Transverse colon (tissue), 4 donors: ENCODE measurements at regions of chr2 and their contacts with region 1.

Region 1: GRCh38 chr2:238239872-238240751 is at the start of gene HES6:
- DNase-seq: peak; percentile 91
- H3K4me3 ChIP-seq: peak within 1 kb of the TSS; percentile 64 to 89 (median 78)
- H3K27ac ChIP-seq: peak within 1 kb of the TSS; percentile 84 to 89 (median 88)
- H3K4me1 ChIP-seq: peaks cover 23 to 48% (median 40%) of the 10 kb centered on the region in 4 donors
- H3K27me3 ChIP-seq: peaks cover 8% of the 10 kb centered on the region
- CTCF ChIP-seq: no peak
- EP300 ChIP-seq: no peak
- POLR2A ChIP-seq: no peak
- total RNA-seq, gene HES6: 15.0 to 94.5 (median 31.7) TPM

Region 2: DNA sequence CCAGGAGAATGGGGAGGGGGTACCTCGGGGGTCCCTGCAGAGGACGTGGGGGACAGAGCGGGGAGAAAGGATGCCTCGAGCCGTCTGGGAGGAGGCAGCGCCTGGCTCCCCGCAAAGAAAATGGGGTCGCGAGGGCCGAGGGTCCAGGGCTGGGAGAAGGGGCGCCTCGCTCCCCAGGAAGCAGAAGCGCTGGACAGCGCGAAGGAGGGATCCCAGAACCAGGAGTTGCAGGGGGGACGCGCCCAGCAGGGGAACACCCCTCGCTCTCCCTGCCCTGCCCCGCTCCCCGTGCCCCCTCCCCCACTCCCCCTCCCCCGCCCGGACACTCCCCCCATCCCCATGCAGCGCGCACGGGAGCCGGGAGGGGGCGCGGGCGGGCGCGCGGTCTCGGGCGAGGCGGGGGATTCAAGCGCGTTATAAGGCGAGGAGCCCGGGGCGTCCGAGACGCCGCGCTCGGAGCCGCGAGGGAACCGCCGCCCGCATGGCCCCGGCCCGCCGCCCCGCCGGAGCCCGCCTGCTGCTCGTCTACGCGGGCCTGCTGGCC is 81.5 kb before region 1 on chr2 and contains the start of gene ERFE:
- in situ Hi-C with region 1: no loop called
- intact Hi-C with region 1: no loop called
- DNase-seq: peak; percentile 47
- H3K4me3 ChIP-seq: peak within 1 kb of the TSS in 3 of 4 donors; percentile 22 to 41 (median 31)
- H3K27ac ChIP-seq: no peak within 1 kb of the TSS
- H3K4me1 ChIP-seq: peaks cover 12 to 21% (median 14%) of the 10 kb centered on the region in 4 donors
- H3K27me3 ChIP-seq: peaks cover 52% of the 10 kb centered on the region
- CTCF ChIP-seq: peak in 3 of 5 experiments; percentile 49 to 62 (median 49)
- EP300 ChIP-seq: no peak
- POLR2A ChIP-seq: no peak
- total RNA-seq, gene ERFE: 0.41 TPM in 1 of 4 donors, not detected in the others

Region 3: DNA sequence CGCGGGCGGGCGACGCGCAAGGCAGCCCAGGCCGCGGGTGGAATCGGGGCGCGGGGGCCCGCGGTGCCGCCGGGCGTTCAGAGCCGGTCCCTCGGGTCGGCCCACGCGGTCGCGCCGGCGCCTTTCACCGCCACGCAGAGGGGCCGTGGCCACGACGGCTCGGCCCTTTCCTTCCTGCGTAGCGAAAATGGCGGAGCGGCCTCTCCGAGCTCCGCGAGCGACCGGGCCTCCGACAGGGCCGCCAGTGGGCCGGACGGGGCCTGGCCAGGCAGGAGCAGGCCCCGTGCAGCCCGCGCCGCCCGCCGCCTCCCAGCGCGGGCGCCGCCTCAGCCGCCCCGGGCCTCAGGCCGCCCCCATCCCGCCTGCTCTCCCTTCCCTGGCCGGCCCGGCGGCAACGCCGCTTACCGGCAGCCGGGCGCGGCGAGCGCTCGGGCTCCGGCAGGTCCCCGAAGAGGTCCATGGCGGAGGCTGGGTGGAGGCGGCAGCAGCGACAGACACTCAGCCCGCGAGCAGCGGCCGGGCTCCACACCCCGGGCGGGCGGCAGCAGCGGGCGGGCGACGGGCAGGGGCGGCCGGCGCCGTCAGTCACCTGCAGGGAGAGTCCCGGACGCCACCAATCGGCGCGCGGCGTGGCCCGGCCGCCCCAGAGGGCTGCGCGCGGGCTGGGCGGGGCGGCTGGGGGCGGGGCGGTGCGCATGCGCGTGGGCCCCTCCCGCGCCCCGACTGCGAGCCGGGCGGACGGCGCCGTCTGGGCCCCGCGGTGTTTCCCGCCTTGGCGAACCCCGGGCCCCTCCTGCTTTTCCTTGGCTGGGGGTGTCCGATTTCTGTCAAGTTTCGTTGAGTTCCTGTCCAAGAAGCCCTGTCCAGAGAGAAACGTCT is 36.8 kb before region 1 on chr2 and contains the start of gene ILKAP:
- in situ Hi-C with region 1: no loop called
- intact Hi-C with region 1: loop called (anchors 5 kb)
- DNase-seq: peak; percentile 91
- H3K4me3 ChIP-seq: peak within 1 kb of the TSS; percentile 69 to 99 (median 85)
- H3K27ac ChIP-seq: peak within 1 kb of the TSS; percentile 95 to 98 (median 95)
- H3K4me1 ChIP-seq: peaks cover 14 to 35% (median 26%) of the 10 kb centered on the region in 4 donors
- H3K27me3 ChIP-seq: peaks cover 3% of the 10 kb centered on the region
- CTCF ChIP-seq: no peak
- EP300 ChIP-seq: no peak
- POLR2A ChIP-seq: peak; percentile 61
- total RNA-seq, gene ILKAP: 16.3 to 40.0 (median 32.1) TPM